IMR-90 (cell line): ENCODE measurements at regions of chr15 and their contacts with region 1.

Region 1: GRCh38 chr15:60916679-60917460 is 312.2 kb downstream of the RORA start:
- DNase-seq: peak; percentile 85
- ATAC-seq: peak; percentile 99
- H3K4me3 ChIP-seq: no peak overlapping the region
- H3K27ac ChIP-seq: no peak overlapping the region
- H3K4me1 ChIP-seq: peaks cover 3% of the 10 kb centered on the region; the same call in 1 of the 2 replicates
- H3K27me3 ChIP-seq: peaks cover 2% of the 10 kb centered on the region; the same call in 1 of the 2 replicates
- CTCF ChIP-seq: peak; percentile 83
- POLR2A ChIP-seq: no peak
- RAD21 ChIP-seq: peak; percentile 83

Region 2: DNA sequence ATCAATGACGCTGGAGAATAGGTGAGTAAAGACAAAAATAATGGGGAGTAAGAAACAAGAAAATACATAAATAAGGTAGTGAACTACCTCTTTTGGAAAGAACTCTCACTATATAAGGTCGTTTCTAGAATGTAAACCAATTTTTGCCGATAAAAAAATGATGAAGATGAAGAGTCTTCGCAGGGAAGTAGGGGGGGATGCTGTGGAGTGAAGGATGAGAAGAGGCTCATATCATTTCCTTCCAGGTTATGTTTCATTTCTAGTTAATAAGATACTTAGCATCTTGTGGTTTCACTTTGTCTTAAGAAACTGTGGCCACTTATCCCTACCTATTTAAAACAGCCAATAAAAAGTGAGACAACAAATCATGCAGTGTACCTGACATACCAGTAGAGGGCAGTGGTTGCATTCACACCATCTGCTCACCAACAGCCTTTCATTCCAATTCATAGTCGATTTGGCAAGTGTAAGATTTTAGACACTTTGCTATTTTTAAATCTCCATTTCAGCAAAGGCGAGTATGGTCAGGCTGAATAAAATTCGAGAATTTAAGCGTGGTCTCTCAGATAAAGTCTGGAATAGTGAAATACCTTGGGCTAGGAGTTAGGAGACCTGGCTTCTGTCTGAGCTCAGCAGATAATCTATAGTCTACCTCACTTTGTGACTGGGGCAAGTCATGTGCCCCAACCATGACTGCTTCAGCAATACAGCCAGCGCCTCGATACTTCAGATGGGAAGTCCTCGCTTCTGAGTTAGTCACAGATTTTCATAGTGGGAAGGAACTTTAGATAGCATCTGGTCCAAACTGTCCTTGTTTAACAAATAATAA is 409.1 kb before region 1 on chr15:
- CTCF ChIA-PET with region 1: no interaction called
- POLR2A ChIA-PET with region 1: no interaction called
- dilution Hi-C with region 1: no loop called
- in situ Hi-C with region 1: no loop called
- intact Hi-C with region 1: loop called (anchors 1 kb)
- DNase-seq: peak; percentile 77
- ATAC-seq: peak; percentile 98
- H3K4me3 ChIP-seq: no peak overlapping the region
- H3K27ac ChIP-seq: no peak overlapping the region
- H3K4me1 ChIP-seq: no peaks in the 10 kb centered on the region
- H3K27me3 ChIP-seq: no peaks in the 10 kb centered on the region
- CTCF ChIP-seq: peak; percentile 95
- POLR2A ChIP-seq: no peak
- RAD21 ChIP-seq: peak; percentile 87

Region 3: DNA sequence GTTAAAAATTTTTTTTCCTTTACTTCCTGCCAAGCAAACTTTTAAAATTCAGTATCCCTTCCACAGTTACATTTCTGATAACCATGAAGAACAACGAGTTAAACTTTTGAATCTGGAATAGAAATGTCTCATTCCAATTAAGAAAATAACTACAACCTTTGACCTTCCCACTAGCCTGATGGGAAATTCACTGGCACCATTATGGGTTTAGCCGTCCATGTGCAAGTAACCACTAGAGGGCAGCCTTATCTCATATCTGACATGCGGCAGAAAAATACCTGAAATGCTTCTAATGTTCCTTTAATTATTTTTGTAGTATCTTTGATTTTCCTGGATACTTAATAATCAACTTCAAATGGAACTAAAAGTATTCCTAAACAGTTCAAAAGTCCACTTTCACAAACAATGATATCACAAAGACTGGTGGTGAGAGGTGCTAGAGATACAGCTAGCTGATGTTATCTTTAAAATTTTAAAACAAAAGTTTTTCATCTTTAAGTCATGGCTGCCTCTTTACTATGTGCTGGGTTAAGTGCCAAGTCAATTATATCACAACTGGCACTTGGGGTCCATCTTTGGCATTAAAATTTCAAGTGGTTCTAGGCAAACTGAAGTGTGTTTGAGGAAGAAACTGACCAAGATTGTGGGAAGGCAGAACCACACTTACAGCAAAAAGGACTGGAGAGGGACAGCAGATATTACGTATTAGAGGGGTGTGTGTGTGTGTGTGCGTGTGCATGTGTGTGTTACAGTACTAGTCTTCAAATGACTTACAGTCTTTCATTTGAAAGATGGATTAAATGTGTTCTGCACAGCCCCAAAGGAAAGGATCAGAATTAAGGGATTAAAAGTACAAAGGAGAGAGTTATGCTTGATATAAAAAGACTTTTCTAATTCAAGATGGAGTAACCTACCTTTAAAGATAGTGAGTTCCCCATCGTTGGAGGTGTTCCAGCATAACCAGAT is 330.8 kb before region 1 on chr15:
- CTCF ChIA-PET with region 1: interaction called, 21 read pairs
- POLR2A ChIA-PET with region 1: no interaction called
- dilution Hi-C with region 1: no loop called
- in situ Hi-C with region 1: loop called (anchors 10 kb)
- intact Hi-C with region 1: loop called (anchors 1 kb)
- DNase-seq: peak; percentile 78
- ATAC-seq: peak; percentile 81
- H3K4me3 ChIP-seq: no peak overlapping the region
- H3K27ac ChIP-seq: no peak overlapping the region
- H3K4me1 ChIP-seq: peaks cover 17% of the 10 kb centered on the region
- H3K27me3 ChIP-seq: no peaks in the 10 kb centered on the region
- CTCF ChIP-seq: peak; percentile 92
- POLR2A ChIP-seq: 0 out of 2 replicates have a peak, but pooled peaks have one; percentile 37
- RAD21 ChIP-seq: peak; percentile 92

Region 4: GRCh38 chr15:60592371-60593169 is 324.3 kb before region 1 on chr15:
- CTCF ChIA-PET with region 1: interaction called, 6 read pairs
- POLR2A ChIA-PET with region 1: no interaction called
- dilution Hi-C with region 1: no loop called
- in situ Hi-C with region 1: loop called (anchors 10 kb)
- intact Hi-C with region 1: loop called (anchors 1 kb)
- DNase-seq: peak; percentile 68
- ATAC-seq: peak; percentile 86
- H3K4me3 ChIP-seq: peak overlapping the region; percentile 94
- H3K27ac ChIP-seq: peak overlapping the region; percentile 80; the same call in 1 of the 2 replicates
- H3K4me1 ChIP-seq: peaks cover 5% of the 10 kb centered on the region; the same call in 1 of the 2 replicates
- H3K27me3 ChIP-seq: peaks cover 17% of the 10 kb centered on the region
- CTCF ChIP-seq: peak; percentile 22; the same call in 1 of the 2 replicates
- POLR2A ChIP-seq: peak; percentile 82
- RAD21 ChIP-seq: no peak

Region 5: GRCh38 chr15:61017627-61018026 is 100.8 kb after region 1 on chr15:
- CTCF ChIA-PET with region 1: no interaction called
- POLR2A ChIA-PET with region 1: no interaction called
- dilution Hi-C with region 1: no loop called
- in situ Hi-C with region 1: no loop called
- intact Hi-C with region 1: no loop called
- DNase-seq: no peak
- ATAC-seq: no peak
- H3K4me3 ChIP-seq: no peak overlapping the region
- H3K27ac ChIP-seq: no peak overlapping the region
- H3K4me1 ChIP-seq: no peaks in the 10 kb centered on the region
- H3K27me3 ChIP-seq: no peaks in the 10 kb centered on the region
- CTCF ChIP-seq: no peak
- POLR2A ChIP-seq: no peak
- RAD21 ChIP-seq: no peak

Region 6: GRCh38 chr15:61034678-61035291 is 117.9 kb after region 1 on chr15:
- CTCF ChIA-PET with region 1: no interaction called
- POLR2A ChIA-PET with region 1: interaction called, 13 read pairs
- dilution Hi-C with region 1: no loop called
- in situ Hi-C with region 1: no loop called
- intact Hi-C with region 1: no loop called
- DNase-seq: peak; percentile 85
- ATAC-seq: peak; percentile 67
- H3K4me3 ChIP-seq: no peak overlapping the region
- H3K27ac ChIP-seq: peak overlapping the region; percentile 53; the same call in 1 of the 2 replicates
- H3K4me1 ChIP-seq: peaks cover 10% of the 10 kb centered on the region
- H3K27me3 ChIP-seq: no peaks in the 10 kb centered on the region
- CTCF ChIP-seq: no peak
- POLR2A ChIP-seq: no peak
- RAD21 ChIP-seq: no peak

Region 7: DNA sequence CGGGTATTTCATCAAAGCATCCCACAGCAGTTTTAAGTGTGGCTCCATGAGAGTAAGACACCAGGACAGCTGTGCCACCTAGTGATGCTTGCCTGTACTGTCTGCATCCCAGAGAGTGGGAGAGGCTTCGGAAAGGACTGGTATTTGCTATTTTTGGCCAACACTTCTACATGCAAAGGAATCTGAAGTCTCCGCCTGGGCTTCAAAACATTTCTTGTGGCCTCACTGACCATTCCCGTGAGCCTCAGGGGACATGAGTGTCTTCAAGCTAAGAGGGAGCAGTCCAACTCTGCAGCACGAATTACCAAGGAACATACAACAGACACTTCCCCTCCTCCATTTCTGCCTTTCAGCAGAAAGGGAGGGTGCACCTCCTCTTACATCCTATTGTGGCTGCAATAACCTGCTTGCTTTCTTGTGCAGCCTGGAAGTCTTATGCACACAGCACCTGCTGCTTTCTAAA is 134.7 kb after region 1 on chr15:
- CTCF ChIA-PET with region 1: interaction called, 6 read pairs
- POLR2A ChIA-PET with region 1: no interaction called
- dilution Hi-C with region 1: no loop called
- in situ Hi-C with region 1: loop called (anchors 10 kb)
- intact Hi-C with region 1: loop called (anchors 1 kb)
- DNase-seq: peak; percentile 78
- ATAC-seq: peak; percentile 95
- H3K4me3 ChIP-seq: no peak overlapping the region
- H3K27ac ChIP-seq: no peak overlapping the region
- H3K4me1 ChIP-seq: peaks cover 15% of the 10 kb centered on the region
- H3K27me3 ChIP-seq: peaks cover 3% of the 10 kb centered on the region; the same call in 1 of the 2 replicates
- CTCF ChIP-seq: peak; percentile 88
- POLR2A ChIP-seq: no peak
- RAD21 ChIP-seq: peak; percentile 90

Region 8: GRCh38 chr15:61834076-61834697 is 917.3 kb after region 1 on chr15:
- CTCF ChIA-PET with region 1: no interaction called
- POLR2A ChIA-PET with region 1: no interaction called
- dilution Hi-C with region 1: no loop called
- in situ Hi-C with region 1: no loop called
- intact Hi-C with region 1: loop called (anchors 2 kb)
- DNase-seq: peak; percentile 72
- ATAC-seq: peak; percentile 89
- H3K4me3 ChIP-seq: no peak overlapping the region
- H3K27ac ChIP-seq: no peak overlapping the region
- H3K4me1 ChIP-seq: no peaks in the 10 kb centered on the region
- H3K27me3 ChIP-seq: peaks cover 14% of the 10 kb centered on the region
- CTCF ChIP-seq: peak; percentile 92
- POLR2A ChIP-seq: no peak
- RAD21 ChIP-seq: peak; percentile 78